GM18951 (cell line): ENCODE measurements at regions of chr15 and their contacts with region 1.

Region 1: GRCh38 chr15:90320061-90320884 is 31.8 kb upstream of the ZNF774 start:
- POLR2A ChIP-seq: no peak

Region 2: GRCh38 chr15:89776274-89777072 is 543.8 kb before region 1 on chr15 and contains the start of gene MESP2:
- in situ Hi-C with region 1: no loop called
- POLR2A ChIP-seq: no peak

Region 3: GRCh38 chr15:90886041-90886614 is 565.9 kb after region 1 on chr15:
- in situ Hi-C with region 1: loop called (anchors 10 kb)
- POLR2A ChIP-seq: no peak